Gastrocnemius medialis (tissue), 4 donors: ENCODE measurements at regions of chr7 and their contacts with region 1.

Region 1: GRCh38 chr7:10973061-10973944 is at the start of gene PHF14:
- DNase-seq: peak; percentile 92 to 96
- ATAC-seq: peak; percentile 96 to 99
- H3K4me3 ChIP-seq: peak within 1 kb of the TSS; percentile 74 to 90 (median 86)
- H3K27ac ChIP-seq: peak within 1 kb of the TSS; percentile 80 to 90 (median 83)
- H3K4me1 ChIP-seq: peaks cover 4 to 20% of the 10 kb centered on the region in 2 donors
- H3K27me3 ChIP-seq: no peaks in the 10 kb centered on the region
- CTCF ChIP-seq: no peak
- POLR2A ChIP-seq: peak; percentile 55
- total RNA-seq, gene PHF14: 8.9 to 24.7 (median 12.4) TPM

Region 2: GRCh38 chr7:10939911-10940703 is 33.2 kb before region 1 on chr7:
- in situ Hi-C with region 1: loop called in 1 of 4 experiments (anchors 5 kb)
- intact Hi-C with region 1: loop called (anchors 1 kb)
- DNase-seq: peak; percentile 87 to 92
- ATAC-seq: peak; percentile 93 to 95
- H3K4me3 ChIP-seq: peak overlapping the region; percentile 73 to 96 (median 82)
- H3K27ac ChIP-seq: peak overlapping the region; percentile 90 to 93 (median 91)
- H3K4me1 ChIP-seq: peaks cover 35 to 39% of the 10 kb centered on the region in 2 donors
- H3K27me3 ChIP-seq: no peaks in the 10 kb centered on the region
- CTCF ChIP-seq: peak in 2 of 5 experiments; percentile 10 to 25
- POLR2A ChIP-seq: peak; percentile 57 to 77